ENCODE measurements at regions of chr16 and their contacts with region 1.

Region 1: DNA sequence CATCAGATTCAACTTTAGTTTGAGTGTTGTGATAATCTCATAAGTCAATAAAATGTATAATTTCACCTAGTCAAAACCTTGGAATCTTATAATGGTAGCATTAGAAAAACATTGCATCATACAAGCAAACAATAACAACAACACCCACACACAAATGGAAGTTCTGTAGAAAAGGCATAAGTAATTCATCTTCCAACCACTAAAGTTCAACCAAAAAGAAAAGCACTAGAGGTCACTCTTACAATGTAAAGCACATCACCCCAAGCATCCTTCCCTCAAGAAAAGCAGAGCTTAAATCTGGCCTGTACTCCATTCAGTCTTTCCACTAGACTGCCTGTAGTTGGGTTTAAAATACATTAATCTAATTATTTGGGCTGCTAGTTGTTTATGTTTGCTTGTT is 1.8 kb downstream of the CNTNAP4 start:
- DNase-seq: peak; percentile 53
- H3K4me3 Mint-ChIP-seq: no peak overlapping the region
- H3K27ac Mint-ChIP-seq: no peak overlapping the region
- H3K4me1 Mint-ChIP-seq: peaks cover 9% of the 10 kb centered on the region
- H3K27me3 Mint-ChIP-seq: peaks cover 15% of the 10 kb centered on the region
- CTCF ChIP-seq: peak; percentile 47

Region 2: GRCh38 chr16:75789237-75789636 is 489.7 kb before region 1 on chr16:
- CTCF ChIA-PET with region 1: no interaction called
- POLR2A ChIA-PET with region 1: interaction called, 4 read pairs
- intact Hi-C with region 1: loop called (anchors 2 kb)
- DNase-seq: peak; percentile 69
- H3K4me3 Mint-ChIP-seq: no peak overlapping the region
- H3K27ac Mint-ChIP-seq: no peak overlapping the region
- H3K4me1 Mint-ChIP-seq: no peaks in the 10 kb centered on the region
- H3K27me3 Mint-ChIP-seq: no peaks in the 10 kb centered on the region
- CTCF ChIP-seq: peak; percentile 67

Region 3: GRCh38 chr16:75801307-75801706 is 477.7 kb before region 1 on chr16:
- CTCF ChIA-PET with region 1: interaction called, 37 read pairs
- POLR2A ChIA-PET with region 1: no interaction called
- intact Hi-C with region 1: loop called (anchors 2 kb)
- DNase-seq: peak; percentile 22
- H3K4me3 Mint-ChIP-seq: no peak overlapping the region
- H3K27ac Mint-ChIP-seq: no peak overlapping the region
- H3K4me1 Mint-ChIP-seq: peaks cover 5% of the 10 kb centered on the region
- H3K27me3 Mint-ChIP-seq: no peaks in the 10 kb centered on the region
- CTCF ChIP-seq: peak; percentile 48

Region 4: DNA sequence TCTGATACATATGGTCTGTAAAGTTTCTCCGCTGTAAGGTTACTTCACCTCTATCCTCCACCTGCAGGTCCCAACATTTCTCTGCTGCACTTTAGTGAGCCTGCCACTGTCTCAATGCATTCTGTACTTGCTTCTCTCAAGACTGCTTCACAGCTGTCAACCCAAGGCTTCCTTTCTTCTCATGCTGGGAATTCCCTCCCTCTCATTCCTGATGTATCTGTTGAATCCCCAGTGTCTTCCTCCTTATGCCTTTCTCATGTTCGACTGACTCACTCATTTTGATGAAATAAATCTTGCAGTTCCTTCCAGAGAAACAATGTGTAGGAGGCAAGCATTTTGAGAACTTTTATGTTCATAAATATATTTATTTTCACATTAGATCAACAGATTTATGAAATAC is 286.6 kb after region 1 on chr16:
- CTCF ChIA-PET with region 1: no interaction called
- POLR2A ChIA-PET with region 1: no interaction called
- intact Hi-C with region 1: no loop called
- DNase-seq: no peak
- H3K4me3 Mint-ChIP-seq: no peak overlapping the region
- H3K27ac Mint-ChIP-seq: no peak overlapping the region
- H3K4me1 Mint-ChIP-seq: no peaks in the 10 kb centered on the region
- H3K27me3 Mint-ChIP-seq: peaks cover 19% of the 10 kb centered on the region
- CTCF ChIP-seq: no peak

Region 5: DNA sequence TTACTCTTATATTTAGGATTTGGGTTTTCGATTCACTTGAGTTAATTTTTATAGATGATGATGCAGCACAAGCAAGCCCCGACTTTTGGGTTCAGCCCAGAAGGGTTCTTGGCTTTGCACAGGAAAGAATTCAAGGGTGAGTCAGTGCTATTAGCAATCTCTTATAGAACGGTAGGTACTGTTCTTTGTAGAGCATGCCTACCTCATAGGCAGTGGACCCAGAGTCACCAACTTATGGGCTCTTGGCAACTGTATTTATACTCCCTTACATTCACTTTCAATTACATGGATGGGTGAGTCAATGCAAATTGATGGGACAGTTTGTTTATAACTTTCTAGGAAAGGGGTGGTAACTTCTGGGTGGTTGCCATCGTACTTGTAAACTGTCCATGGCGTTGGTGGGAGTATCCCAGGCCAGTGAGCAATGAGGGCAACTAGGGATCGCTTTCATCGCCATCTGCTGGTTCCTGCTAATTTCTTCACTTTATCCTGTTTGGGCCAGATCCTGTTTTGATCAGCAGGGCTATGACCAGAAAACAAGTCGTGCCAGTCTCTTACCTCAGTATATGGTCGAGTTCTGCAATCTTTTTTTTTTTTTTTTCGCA is 360.8 kb after region 1 on chr16:
- CTCF ChIA-PET with region 1: interaction called, 8 read pairs
- POLR2A ChIA-PET with region 1: no interaction called
- intact Hi-C with region 1: loop called (anchors 1 kb)
- DNase-seq: peak; percentile 91
- H3K4me3 Mint-ChIP-seq: peak overlapping the region; percentile 28
- H3K27ac Mint-ChIP-seq: peak overlapping the region; percentile 71
- H3K4me1 Mint-ChIP-seq: peaks cover 24% of the 10 kb centered on the region
- H3K27me3 Mint-ChIP-seq: no peaks in the 10 kb centered on the region
- CTCF ChIP-seq: peak; percentile 37

Region 6: DNA sequence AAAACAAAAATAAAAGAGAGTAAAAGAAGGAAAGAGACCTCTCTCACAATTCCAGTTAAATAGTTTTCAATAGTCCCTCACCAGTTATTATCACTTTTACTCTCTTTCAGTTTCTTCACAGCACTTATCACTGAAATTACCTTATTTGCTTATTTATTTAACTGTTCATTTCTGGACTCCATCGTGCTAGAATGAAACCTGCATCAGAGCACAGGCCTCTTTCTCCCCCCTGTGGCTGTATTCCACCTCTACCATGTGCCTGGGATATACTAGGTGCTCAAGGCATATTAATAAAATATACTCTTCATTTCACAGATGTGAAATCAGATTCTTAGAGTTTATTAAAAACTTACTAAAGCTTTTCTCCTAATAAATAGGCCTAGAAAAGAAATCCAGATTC is 603.1 kb after region 1 on chr16:
- CTCF ChIA-PET with region 1: interaction called, 15 read pairs
- POLR2A ChIA-PET with region 1: no interaction called
- intact Hi-C with region 1: loop called (anchors 5 kb)
- DNase-seq: peak; percentile 56
- H3K4me3 Mint-ChIP-seq: no peak overlapping the region
- H3K27ac Mint-ChIP-seq: no peak overlapping the region
- H3K4me1 Mint-ChIP-seq: no peaks in the 10 kb centered on the region
- H3K27me3 Mint-ChIP-seq: no peaks in the 10 kb centered on the region
- CTCF ChIP-seq: peak; percentile 44

Measured in MCF 10A (cell line).